GM13976 (cell line): ENCODE measurements at regions of chr19 and their contacts with region 1.

Region 1: DNA sequence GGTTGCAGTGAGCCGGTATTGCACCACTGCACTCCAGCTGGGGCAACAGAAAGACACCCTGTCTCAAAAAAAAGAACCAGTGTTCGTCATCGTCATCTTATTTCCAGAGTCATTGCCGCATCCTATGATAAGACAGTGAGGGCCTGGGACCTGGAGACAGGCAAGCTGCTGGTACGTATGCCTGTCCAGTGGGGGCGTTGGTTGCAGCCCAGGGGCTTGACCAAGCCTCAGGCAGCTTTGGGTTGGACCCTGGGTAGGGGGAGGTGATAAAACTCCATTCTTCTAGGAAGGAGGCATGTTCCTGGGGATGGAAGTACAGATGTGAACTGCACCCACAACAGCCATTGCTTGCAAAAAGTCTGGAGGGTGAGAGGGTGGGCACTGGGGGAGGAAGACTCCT is 15.6 kb downstream of the WDR88 start:
- DNase-seq: no peak
- CTCF ChIP-seq: no peak

Region 2: GRCh38 chr19:33040994-33041827 is 106.3 kb before region 1 on chr19:
- in situ Hi-C with region 1: no loop called
- DNase-seq: no peak
- CTCF ChIP-seq: no peak

Region 3: GRCh38 chr19:33176670-33177416 is 29.3 kb after region 1 on chr19:
- in situ Hi-C with region 1: loop called (anchors 5 kb)
- DNase-seq: peak; percentile 98
- CTCF ChIP-seq: no peak